Heart left ventricle (tissue), 16 donors: ENCODE measurements at regions of chr19 and their contacts with region 1.

Region 1: GRCh38 chr19:45779231-45780145 is 2.8 kb downstream of the DMPK start:
- DNase-seq: peak; percentile 73 to 83 (median 80)
- ATAC-seq: peak in 3 of 4 donors; percentile 41 to 55 (median 46)
- H3K4me3 ChIP-seq: peak overlapping the region in 8 of 12 donors; percentile 59 to 92 (median 75)
- H3K27ac ChIP-seq: peak overlapping the region in 8 of 12 donors; percentile 13 to 98 (median 96)
- H3K4me1 ChIP-seq: peaks cover 0 to 55% (median 38%) of the 10 kb centered on the region in 12 donors
- H3K27me3 ChIP-seq: peaks cover 0 to 62% (median 0%) of the 10 kb centered on the region in 9 donors
- CTCF ChIP-seq: peak in 11 of 12 donors; percentile 29 to 61 (median 48)
- POLR2A ChIP-seq: no peak

Region 2: GRCh38 chr19:45607071-45608029 is 172.1 kb before region 1 on chr19:
- intact Hi-C with region 1: no loop called
- DNase-seq: peak; percentile 77 to 85 (median 80)
- ATAC-seq: peak; percentile 78 to 90 (median 86)
- H3K4me3 ChIP-seq: peak overlapping the region in 9 of 12 donors; percentile 29 to 50 (median 41)
- H3K27ac ChIP-seq: peak overlapping the region in 11 of 12 donors; percentile 34 to 76 (median 64)
- H3K4me1 ChIP-seq: peaks cover 0 to 14% (median 9%) of the 10 kb centered on the region in 12 donors
- H3K27me3 ChIP-seq: peaks cover 0 to 12% (median 5%) of the 10 kb centered on the region in 9 donors
- CTCF ChIP-seq: peak; percentile 77 to 95 (median 88)
- POLR2A ChIP-seq: no peak

Region 3: DNA sequence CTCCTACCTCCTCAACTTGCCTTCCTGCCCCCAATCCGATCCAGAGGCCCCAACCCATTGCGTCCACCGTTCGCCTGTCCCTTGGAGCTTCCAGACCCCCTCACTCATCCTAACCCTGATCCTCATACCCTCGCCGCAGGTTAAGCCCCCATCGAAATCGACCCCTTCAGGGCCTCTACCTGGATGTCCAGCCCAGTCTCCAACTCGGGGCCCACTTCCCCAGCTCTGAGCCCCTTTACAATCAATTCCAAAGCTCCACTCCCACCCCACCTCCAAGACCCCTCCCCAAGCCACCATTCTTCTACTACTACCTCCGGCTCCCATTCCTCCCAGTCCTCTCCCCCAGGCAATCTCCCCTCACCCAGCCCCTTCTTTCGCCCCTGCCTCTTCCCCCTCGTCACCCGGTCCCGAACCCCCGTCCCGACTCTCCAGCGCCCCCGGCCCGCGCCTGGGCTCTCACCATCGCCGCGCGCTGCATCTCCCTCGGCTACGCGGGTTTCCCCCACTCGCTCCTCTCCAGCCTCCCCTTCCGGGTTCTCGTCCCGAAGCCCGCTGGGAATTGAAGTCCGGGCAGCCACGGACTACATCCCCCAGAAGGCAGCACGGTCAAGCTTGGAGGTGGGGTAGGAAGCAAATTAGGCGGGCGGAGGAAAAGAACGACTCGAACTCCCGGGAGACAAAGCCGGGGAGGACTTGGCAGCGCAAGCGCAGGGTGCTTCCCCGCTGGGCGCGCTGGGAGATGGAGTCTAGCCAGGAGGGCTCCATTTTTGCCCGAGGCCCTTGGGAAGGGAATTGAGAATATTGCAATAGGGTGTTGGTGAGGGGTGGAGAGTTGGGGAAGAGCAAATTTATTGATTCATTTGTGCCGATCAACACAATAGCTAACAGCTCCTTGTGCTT is 48.8 kb before region 1 on chr19 and contains the start of gene FBXO46:
- intact Hi-C with region 1: no loop called
- DNase-seq: peak; percentile 97 to 99 (median 98)
- ATAC-seq: peak; percentile 98 to 99 (median 99)
- H3K4me3 ChIP-seq: peak within 1 kb of the TSS; percentile 66 to 93 (median 80)
- H3K27ac ChIP-seq: peak within 1 kb of the TSS in 11 of 12 donors; percentile 57 to 84 (median 62)
- H3K4me1 ChIP-seq: peaks cover 0 to 22% (median 12%) of the 10 kb centered on the region in 12 donors
- H3K27me3 ChIP-seq: no peaks in the 10 kb centered on the region
- CTCF ChIP-seq: no peak
- POLR2A ChIP-seq: peak in 1 of 2 donors; percentile 73
- total RNA-seq, gene FBXO46: 9.1 to 17.8 (median 10.3) TPM

Region 4: GRCh38 chr19:45798995-45799517 is 19.6 kb after region 1 on chr19:
- intact Hi-C with region 1: loop called in 1 of 10 experiments (anchors 2 kb)
- DNase-seq: peak in 1 of 5 donors; percentile 57
- ATAC-seq: peak; percentile 48 to 86 (median 78)
- H3K4me3 ChIP-seq: no peak overlapping the region
- H3K27ac ChIP-seq: no peak overlapping the region
- H3K4me1 ChIP-seq: peaks cover 0 to 9% (median 6%) of the 10 kb centered on the region in 12 donors
- H3K27me3 ChIP-seq: peaks cover 0 to 69% (median 0%) of the 10 kb centered on the region in 9 donors
- CTCF ChIP-seq: peak; percentile 80 to 93 (median 88)
- POLR2A ChIP-seq: no peak

Region 5: GRCh38 chr19:45902651-45903625 is 123.5 kb after region 1 on chr19:
- intact Hi-C with region 1: no loop called
- DNase-seq: peak; percentile 98 to 100 (median 99)
- ATAC-seq: peak; percentile 95 to 97 (median 96)
- H3K4me3 ChIP-seq: peak overlapping the region; percentile 52 to 84 (median 77)
- H3K27ac ChIP-seq: peak overlapping the region; percentile 63 to 88 (median 79)
- H3K4me1 ChIP-seq: peaks cover 3 to 26% (median 16%) of the 10 kb centered on the region in 12 donors
- H3K27me3 ChIP-seq: no peaks in the 10 kb centered on the region
- CTCF ChIP-seq: peak in 1 of 12 donors; percentile 9
- POLR2A ChIP-seq: peak in 1 of 2 donors; percentile 78

Region 6: DNA sequence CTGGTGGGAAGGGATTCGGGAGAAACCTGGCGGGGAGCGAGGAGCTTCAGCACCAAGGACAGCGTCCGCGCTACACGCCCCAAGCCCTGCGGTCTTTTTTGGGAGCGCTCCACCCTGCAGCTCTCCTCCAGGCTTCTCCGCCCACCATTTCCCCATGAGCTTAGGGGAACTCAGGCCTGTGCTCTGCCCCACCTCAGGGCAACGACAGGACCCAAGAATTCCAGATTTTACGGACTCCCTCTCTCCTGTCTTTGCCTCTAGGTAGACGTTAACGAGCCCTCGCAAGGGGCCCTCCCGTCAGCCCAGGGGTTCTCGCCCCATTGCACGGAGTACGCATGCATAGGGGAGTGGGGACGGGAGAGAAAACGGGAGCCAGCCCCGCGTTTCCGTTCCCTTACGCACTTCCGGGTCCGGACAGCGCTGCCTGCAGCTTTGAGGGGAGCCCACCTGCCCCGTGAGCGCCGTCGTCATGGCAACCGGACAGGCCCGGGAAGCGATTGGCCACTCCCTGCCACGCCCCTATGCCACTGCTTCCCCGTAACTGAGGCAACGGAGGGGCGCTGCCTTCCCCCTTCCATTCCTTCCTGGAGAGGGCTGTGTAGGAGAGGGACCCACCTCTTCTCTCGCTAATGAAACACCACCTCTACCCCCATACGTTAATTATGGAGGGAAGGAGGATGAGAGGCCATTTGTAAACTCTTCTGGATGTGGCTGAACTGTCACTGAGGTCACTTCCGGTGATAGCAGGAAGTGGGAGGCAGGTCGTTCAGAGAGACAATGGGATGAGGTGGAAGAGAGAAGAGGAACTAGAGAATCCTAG is 173.4 kb after region 1 on chr19:
- intact Hi-C with region 1: no loop called
- DNase-seq: peak in 3 of 5 donors; percentile 42 to 57 (median 53)
- ATAC-seq: peak in 3 of 4 donors; percentile 40 to 70 (median 57)
- H3K4me3 ChIP-seq: peak overlapping the region in 5 of 12 donors; percentile 5 to 33 (median 11)
- H3K27ac ChIP-seq: peak overlapping the region in 5 of 12 donors; percentile 0 to 78 (median 46)
- H3K4me1 ChIP-seq: peaks cover 0 to 42% (median 25%) of the 10 kb centered on the region in 12 donors
- H3K27me3 ChIP-seq: peaks cover 0 to 28% (median 4%) of the 10 kb centered on the region in 9 donors
- CTCF ChIP-seq: no peak
- POLR2A ChIP-seq: no peak